ENCODE measurements at regions of chr18 and their contacts with region 1.

Region 1: GRCh38 chr18:63141778-63142176 is 177.8 kb downstream of the BCL2 start:
- DNase-seq: no peak
- H3K4me3 ChIP-seq: no peak overlapping the region
- H3K27ac ChIP-seq: no peak overlapping the region
- H3K4me1 ChIP-seq: no peaks in the 10 kb centered on the region
- H3K27me3 ChIP-seq: no peaks in the 10 kb centered on the region
- CTCF ChIP-seq: no peak

Region 2: DNA sequence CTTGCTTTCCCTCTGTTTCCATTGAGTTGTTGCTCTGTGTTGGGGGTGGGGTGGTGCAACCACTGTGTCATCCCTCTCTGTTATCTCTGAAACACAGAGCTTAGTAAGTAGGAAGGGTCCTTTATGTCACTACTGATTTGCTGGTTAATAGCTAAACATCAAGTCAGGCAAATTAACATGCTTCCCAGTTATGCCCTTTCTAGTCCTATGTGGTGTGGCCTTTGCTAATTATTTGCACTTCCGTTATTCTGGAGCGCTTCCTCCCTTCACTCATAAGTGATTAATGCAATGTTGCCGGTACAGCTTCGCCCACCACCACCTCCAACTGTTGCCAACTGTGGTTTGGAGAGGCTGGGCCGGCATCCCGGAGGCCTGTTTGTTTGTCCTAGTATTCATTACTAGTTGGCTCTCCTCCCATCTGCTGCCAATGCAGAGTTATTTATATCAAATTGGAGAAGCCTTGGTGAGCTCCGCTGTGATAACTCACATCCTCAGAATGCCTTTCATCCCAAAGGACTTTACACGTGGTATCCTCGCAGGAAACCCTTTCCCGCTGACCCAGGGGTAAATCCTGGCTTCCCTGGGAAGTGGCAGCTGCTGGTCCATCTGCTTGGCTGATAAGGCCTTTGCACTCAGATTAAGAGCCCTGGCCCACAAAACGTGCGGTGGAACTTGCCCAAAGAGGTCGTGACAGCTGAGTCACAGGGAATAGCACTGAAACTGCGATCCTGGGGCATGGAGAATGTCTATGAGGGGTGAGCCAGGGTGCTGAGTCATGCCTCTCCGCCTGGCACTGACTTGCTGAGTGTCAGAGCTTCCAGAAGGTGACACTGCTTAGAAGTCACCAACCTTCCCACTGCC is 691.0 kb before region 1 on chr18:
- CTCF ChIA-PET with region 1: no interaction called
- POLR2A ChIA-PET with region 1: no interaction called
- intact Hi-C with region 1: no loop called
- DNase-seq: peak; percentile 75 to 95
- H3K4me3 ChIP-seq: no peak overlapping the region; the same call in 1 of the 2 replicates
- H3K27ac ChIP-seq: peak overlapping the region; percentile 92
- H3K4me1 ChIP-seq: peaks cover 48% of the 10 kb centered on the region
- H3K27me3 ChIP-seq: no peaks in the 10 kb centered on the region
- CTCF ChIP-seq: no peak

Region 3: GRCh38 chr18:63098018-63098981 is 43.5 kb before region 1 on chr18:
- CTCF ChIA-PET with region 1: no interaction called
- POLR2A ChIA-PET with region 1: no interaction called
- intact Hi-C with region 1: no loop called
- DNase-seq: no peak
- H3K4me3 ChIP-seq: no peak overlapping the region
- H3K27ac ChIP-seq: no peak overlapping the region
- H3K4me1 ChIP-seq: no peaks in the 10 kb centered on the region
- H3K27me3 ChIP-seq: no peaks in the 10 kb centered on the region
- CTCF ChIP-seq: no peak

Region 4: DNA sequence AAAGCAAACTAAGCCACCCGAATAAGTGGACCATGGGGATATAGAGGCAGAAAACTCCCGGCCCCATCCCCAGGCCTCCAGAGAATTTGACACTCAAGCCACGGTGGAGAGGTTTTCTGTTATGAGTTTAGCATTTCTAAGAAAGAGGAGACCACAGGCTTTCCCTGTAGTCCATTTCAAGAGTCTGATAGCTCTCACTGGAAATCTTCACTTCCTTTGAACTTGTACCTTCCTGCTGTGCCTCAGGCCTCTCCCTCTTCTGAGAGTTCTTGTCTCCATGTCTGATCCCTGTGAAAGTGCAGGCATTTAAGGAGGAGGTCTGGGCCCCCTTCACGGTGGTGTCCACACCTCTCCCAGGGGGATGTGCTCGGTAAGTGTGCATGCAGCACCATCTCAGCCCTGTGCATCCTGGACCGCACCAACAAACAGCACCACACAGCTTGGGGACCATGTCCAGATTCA is 64.0 kb after region 1 on chr18:
- CTCF ChIA-PET with region 1: no interaction called
- POLR2A ChIA-PET with region 1: no interaction called
- intact Hi-C with region 1: loop called (anchors 2 kb)
- DNase-seq: no peak
- H3K4me3 ChIP-seq: no peak overlapping the region
- H3K27ac ChIP-seq: no peak overlapping the region
- H3K4me1 ChIP-seq: no peaks in the 10 kb centered on the region
- H3K27me3 ChIP-seq: no peaks in the 10 kb centered on the region
- CTCF ChIP-seq: no peak

Measured in PC-9 (cell line).